ENCODE measurements at regions of chr2 and their contacts with region 1.

Region 1: DNA sequence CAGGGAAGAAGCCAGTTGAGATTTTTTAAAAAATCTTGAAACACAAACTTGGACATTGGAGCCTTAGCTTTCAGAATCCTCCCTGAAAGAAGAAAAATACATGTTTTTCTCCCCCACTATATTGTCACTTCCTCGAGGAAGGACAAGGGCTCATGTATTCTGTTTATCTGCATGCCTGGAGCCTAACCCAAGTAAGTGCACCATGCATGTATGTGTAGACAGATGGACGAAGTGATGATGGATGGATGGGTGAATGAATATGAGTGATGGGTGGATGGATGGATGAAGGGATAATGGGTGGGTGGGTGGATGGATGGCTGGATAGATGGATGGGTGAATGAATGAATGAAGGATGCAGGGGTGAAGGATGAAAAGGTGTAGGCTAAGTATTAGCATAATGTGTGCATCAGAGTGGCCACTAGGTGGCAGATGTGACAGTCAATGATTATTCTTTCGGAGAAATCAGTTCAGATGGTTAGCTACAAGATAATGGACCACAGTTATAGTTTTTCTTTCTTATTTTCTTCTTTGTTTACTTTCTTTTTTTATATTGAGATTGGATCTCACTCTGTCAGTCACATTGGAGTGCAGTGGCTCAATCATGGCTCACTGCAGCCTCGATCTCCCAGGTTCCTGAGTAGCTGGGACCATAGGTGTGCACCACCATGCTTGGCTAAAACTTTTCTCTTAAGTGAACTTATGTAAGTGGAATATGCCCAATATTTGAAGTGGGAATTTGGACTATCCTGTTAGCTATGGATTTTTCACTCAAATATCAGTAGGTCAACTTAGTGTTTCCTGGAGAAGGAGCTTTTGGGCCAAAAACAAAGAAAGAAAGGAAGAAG is 18.5 kb upstream of the CCDC93 start:
- DNase-seq: peak in 1 of 5 donors; percentile 45
- H3K4me3 ChIP-seq: no peak overlapping the region
- H3K27ac ChIP-seq: no peak overlapping the region
- H3K4me1 ChIP-seq: no peaks in the 10 kb centered on the region
- H3K27me3 ChIP-seq: no peaks in the 10 kb centered on the region
- CTCF ChIP-seq: peak; percentile 69

Region 2: GRCh38 chr2:118148809-118149208 is 116.4 kb after region 1 on chr2:
- intact Hi-C with region 1: no loop called
- DNase-seq: no peak
- H3K4me3 ChIP-seq: no peak overlapping the region
- H3K27ac ChIP-seq: no peak overlapping the region
- H3K4me1 ChIP-seq: no peaks in the 10 kb centered on the region
- H3K27me3 ChIP-seq: no peaks in the 10 kb centered on the region
- CTCF ChIP-seq: peak; percentile 5

Region 3: DNA sequence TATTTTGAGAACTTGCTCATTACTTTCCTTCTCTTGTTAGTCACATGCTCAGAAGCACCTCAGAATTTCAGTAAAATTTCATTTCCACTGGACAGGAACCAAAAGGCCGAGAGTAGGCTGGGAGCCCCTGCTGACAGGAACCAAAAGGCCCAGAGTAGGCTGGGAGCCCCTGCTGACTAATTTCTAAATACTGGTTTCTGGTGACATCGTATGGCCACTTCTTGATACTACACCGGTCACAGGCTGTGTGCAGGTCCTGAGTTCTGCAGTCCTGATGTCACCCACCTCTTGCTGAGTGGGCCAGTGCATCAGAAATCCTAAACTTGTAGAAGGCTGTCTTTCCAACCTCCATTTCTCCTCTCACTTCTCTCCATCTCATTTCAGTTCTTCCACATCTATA is 832.7 kb after region 1 on chr2:
- intact Hi-C with region 1: loop called (anchors 10 kb)
- DNase-seq: peak in 4 of 5 donors; percentile 43 to 73 (median 60)
- H3K4me3 ChIP-seq: no peak overlapping the region
- H3K27ac ChIP-seq: no peak overlapping the region
- H3K4me1 ChIP-seq: no peaks in the 10 kb centered on the region
- H3K27me3 ChIP-seq: peaks cover 21% of the 10 kb centered on the region
- CTCF ChIP-seq: peak; percentile 53

Measured in kidney (tissue), 22 donors.